ENCODE measurements at regions of chr6 and their contacts with region 1.

Region 1: DNA sequence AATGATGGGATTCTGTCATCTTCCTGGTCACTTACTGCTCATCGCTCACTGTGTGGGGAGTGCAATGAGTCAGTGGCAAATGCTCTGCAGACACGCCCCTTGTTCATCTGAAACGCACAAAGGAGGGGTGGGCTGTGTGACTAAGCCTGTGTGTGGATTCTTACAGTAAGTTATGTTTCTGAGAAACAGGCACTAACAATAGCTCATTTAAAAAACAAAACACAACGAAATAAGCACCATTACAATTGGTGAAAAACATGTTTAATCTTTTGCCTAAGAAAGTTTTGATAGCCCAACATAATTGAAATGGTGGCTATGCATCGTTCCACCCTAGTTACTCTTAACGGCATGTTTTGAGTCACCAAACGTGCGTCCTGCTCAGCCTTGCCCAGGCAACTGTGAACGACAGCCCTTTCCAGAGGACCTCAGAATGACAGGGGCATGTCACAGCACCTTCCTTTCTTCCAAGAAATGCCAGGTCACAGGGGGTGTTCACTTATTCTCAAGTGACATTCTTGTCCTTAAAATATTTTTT is 118.4 kb upstream of the SGK1 start:
- DNase-seq: peak; percentile 84
- ATAC-seq: peak; percentile 90
- H3K4me3 Mint-ChIP-seq: no peak overlapping the region
- H3K27ac Mint-ChIP-seq: peak overlapping the region; percentile 80
- H3K4me1 Mint-ChIP-seq: peaks cover 36% of the 10 kb centered on the region
- H3K27me3 Mint-ChIP-seq: no peaks in the 10 kb centered on the region

Region 2: GRCh38 chr6:133991096-133991593 is 445.2 kb before region 1 on chr6:
- CTCF ChIA-PET with region 1: no interaction called
- POLR2A ChIA-PET with region 1: no interaction called
- intact Hi-C with region 1: no loop called
- DNase-seq: no peak
- ATAC-seq: peak; percentile 55
- H3K4me3 Mint-ChIP-seq: no peak overlapping the region
- H3K27ac Mint-ChIP-seq: no peak overlapping the region
- H3K4me1 Mint-ChIP-seq: peaks cover 8% of the 10 kb centered on the region
- H3K27me3 Mint-ChIP-seq: no peaks in the 10 kb centered on the region

Region 3: GRCh38 chr6:134235937-134236751 is 200.2 kb before region 1 on chr6:
- CTCF ChIA-PET with region 1: no interaction called
- POLR2A ChIA-PET with region 1: no interaction called
- intact Hi-C with region 1: loop called in 1 of 2 experiments (anchors 1 kb)
- DNase-seq: peak; percentile 25
- ATAC-seq: peak; percentile 83
- H3K4me3 Mint-ChIP-seq: peak overlapping the region; percentile 35
- H3K27ac Mint-ChIP-seq: peak overlapping the region; percentile 77
- H3K4me1 Mint-ChIP-seq: peaks cover 41% of the 10 kb centered on the region
- H3K27me3 Mint-ChIP-seq: no peaks in the 10 kb centered on the region

Region 4: DNA sequence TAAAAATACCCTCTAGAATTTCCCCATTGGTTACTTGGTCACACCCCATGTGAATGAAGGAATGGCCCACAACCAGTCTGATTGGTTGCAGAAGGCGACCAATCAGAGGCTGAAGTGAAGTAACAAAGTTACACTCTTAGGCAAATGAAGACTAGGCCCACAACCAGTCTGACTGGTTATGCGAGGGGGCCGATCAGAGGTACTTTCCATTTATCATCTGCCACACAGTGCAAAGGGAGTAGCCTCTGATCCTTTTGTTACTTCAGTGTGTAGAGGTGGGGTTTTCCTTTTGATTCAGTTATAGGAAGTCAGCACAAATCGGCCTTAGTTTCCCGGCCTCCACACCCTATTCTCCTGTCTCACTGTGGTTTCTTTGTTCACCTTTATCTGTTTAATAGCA is 57.3 kb before region 1 on chr6:
- CTCF ChIA-PET with region 1: no interaction called
- POLR2A ChIA-PET with region 1: no interaction called
- intact Hi-C with region 1: loop called (anchors 1 to 2 kb)
- DNase-seq: peak; percentile 73
- ATAC-seq: peak; percentile 96
- H3K4me3 Mint-ChIP-seq: no peak overlapping the region
- H3K27ac Mint-ChIP-seq: peak overlapping the region; percentile 40
- H3K4me1 Mint-ChIP-seq: peaks cover 27% of the 10 kb centered on the region
- H3K27me3 Mint-ChIP-seq: no peaks in the 10 kb centered on the region

Measured in activated CD4-positive, alpha-beta T cell treated with anti-CD3 and anti-CD28 coated beads for 36 hours (primary cell).